Uterus (tissue), 4 donors: ENCODE measurements at regions of chr4 and their contacts with region 1.

Region 1: DNA sequence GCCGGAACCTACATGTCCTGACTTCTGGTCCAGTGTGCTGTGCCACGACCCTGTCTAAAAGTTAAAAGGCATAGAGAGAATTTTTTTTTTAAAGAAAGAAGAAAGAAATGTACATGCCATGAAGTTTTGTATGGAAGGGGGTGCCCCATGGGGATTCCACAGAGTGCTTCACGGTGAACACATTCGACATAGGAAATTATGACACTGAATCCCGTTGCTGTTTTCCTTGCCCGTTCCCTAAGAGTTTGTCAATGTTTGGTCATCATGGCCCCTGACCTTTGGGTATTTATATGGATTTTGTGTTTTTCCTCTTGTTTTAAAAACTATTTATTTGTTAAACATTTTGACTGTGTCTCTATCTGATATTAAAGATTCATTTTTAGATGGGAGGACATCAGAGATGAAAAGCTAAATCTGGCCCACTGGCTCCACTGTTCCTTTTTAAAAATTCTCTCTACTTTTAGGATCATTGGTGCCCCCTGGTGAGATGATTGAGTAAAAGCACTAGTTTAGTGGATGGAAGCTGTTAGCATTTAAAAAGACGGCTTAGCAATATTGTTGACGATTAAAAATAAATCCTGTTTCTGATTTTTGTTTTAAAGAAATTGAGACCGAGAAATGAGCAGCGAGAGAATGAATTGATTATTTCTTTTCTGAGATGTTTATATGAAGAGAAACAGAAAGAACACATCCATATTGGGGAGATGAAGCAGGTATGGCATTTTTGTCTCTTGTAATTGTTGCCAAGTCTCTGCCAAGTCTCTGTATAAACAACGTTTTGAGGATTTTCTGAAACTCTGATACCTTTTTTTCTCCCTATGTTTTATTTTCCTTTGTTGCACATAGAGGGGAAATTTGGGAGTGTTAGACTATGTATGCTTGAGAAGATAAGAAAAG is 75.0 kb downstream of the PTTG2 start:
- DNase-seq: peak in 1 of 2 donors; percentile 68
- H3K4me3 ChIP-seq: no peak overlapping the region
- H3K27ac ChIP-seq: peak overlapping the region; percentile 47 to 99
- H3K4me1 ChIP-seq: peaks cover 0 to 7% of the 10 kb centered on the region in 2 donors
- H3K27me3 ChIP-seq: no peaks in the 10 kb centered on the region
- CTCF ChIP-seq: peak; percentile 65 to 82 (median 68)
- POLR2A ChIP-seq: no peak

Region 2: DNA sequence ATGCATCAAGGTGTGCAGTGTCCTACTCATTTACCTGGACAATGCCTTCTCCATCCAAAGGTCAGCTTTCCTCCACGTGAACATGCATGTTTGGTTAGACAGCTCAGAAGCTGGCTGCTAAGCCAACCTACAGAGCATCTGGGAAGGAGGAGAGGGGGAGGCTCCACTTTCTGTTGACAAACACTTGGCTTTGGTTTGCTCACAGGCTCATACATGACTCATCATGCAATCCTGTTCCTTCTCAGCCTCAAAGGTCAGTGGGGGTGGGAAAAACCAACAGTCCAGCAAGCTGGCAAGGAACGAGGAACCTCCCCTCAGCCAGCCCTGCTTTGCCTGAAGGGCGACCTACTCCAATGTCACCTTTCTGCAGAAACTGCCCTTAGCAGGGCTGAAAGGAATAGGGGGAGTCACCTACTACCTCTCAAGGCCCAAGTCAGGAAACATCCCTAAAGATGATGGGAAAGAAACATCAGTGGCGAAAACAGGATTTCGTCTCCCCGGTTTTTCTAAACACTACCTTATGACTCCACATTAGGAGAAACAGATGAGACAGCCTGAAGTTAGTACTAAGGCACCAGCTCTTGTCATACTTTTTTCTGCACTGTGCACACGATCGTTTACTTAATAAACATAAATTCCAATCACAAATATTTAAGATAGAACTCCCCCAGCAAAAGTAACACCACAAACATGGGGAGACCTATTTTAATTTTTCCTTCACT is 387.0 kb before region 1 on chr4:
- intact Hi-C with region 1: no loop called
- DNase-seq: peak; percentile 68 to 70
- H3K4me3 ChIP-seq: no peak overlapping the region
- H3K27ac ChIP-seq: peak overlapping the region; percentile 28 to 51
- H3K4me1 ChIP-seq: no peaks in the 10 kb centered on the region
- H3K27me3 ChIP-seq: no peaks in the 10 kb centered on the region
- CTCF ChIP-seq: no peak
- POLR2A ChIP-seq: no peak

Region 3: DNA sequence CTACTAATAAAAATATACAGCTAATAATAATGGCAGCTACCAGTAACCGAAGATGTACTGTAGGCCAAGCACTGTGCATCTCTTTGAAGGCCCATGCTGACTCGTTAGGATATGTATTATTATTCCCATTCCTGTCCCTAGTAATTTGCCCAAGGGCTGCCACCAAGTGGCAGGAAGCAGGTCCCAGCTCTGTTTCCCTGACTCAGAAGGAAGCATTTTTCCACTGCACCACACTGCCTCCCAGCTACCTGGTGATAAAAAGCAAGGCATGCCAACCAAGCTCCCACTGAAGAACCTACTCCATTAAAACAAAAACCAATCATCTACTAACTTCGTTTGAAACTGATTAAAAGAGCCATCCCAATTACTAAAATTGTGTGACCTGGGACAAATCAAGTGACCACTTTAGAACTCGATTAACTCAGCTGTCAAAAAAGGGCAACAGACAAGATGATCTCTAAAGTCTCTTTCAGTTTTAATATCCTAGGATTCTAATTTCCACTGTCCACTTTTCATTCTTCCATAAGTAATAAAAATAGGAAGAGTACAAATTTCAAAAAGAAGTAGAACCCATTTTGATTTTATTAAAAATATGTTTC is 233.1 kb before region 1 on chr4:
- intact Hi-C with region 1: loop called (anchors 10 kb)
- DNase-seq: peak in 1 of 2 donors; percentile 21
- H3K4me3 ChIP-seq: no peak overlapping the region
- H3K27ac ChIP-seq: no peak overlapping the region
- H3K4me1 ChIP-seq: no peaks in the 10 kb centered on the region
- H3K27me3 ChIP-seq: no peaks in the 10 kb centered on the region
- CTCF ChIP-seq: peak in 2 of 4 experiments; percentile 43 to 57
- POLR2A ChIP-seq: no peak

Region 4: GRCh38 chr4:37891260-37892159 is 143.7 kb before region 1 on chr4:
- intact Hi-C with region 1: loop called (anchors 10 kb)
- DNase-seq: peak; percentile 48 to 69
- H3K4me3 ChIP-seq: peak overlapping the region; percentile 61 to 64
- H3K27ac ChIP-seq: peak overlapping the region; percentile 92 to 94
- H3K4me1 ChIP-seq: peaks cover 0 to 9% of the 10 kb centered on the region in 2 donors
- H3K27me3 ChIP-seq: no peaks in the 10 kb centered on the region
- CTCF ChIP-seq: peak in 2 of 4 experiments; percentile 21 to 27
- POLR2A ChIP-seq: peak in 1 of 2 donors; percentile 38

Region 5: GRCh38 chr4:37928426-37929416 is 106.5 kb before region 1 on chr4:
- intact Hi-C with region 1: no loop called
- DNase-seq: no peak
- H3K4me3 ChIP-seq: no peak overlapping the region
- H3K27ac ChIP-seq: peak overlapping the region in 1 of 2 donors; percentile 10
- H3K4me1 ChIP-seq: no peaks in the 10 kb centered on the region
- H3K27me3 ChIP-seq: no peaks in the 10 kb centered on the region
- CTCF ChIP-seq: no peak
- POLR2A ChIP-seq: no peak

Region 6: DNA sequence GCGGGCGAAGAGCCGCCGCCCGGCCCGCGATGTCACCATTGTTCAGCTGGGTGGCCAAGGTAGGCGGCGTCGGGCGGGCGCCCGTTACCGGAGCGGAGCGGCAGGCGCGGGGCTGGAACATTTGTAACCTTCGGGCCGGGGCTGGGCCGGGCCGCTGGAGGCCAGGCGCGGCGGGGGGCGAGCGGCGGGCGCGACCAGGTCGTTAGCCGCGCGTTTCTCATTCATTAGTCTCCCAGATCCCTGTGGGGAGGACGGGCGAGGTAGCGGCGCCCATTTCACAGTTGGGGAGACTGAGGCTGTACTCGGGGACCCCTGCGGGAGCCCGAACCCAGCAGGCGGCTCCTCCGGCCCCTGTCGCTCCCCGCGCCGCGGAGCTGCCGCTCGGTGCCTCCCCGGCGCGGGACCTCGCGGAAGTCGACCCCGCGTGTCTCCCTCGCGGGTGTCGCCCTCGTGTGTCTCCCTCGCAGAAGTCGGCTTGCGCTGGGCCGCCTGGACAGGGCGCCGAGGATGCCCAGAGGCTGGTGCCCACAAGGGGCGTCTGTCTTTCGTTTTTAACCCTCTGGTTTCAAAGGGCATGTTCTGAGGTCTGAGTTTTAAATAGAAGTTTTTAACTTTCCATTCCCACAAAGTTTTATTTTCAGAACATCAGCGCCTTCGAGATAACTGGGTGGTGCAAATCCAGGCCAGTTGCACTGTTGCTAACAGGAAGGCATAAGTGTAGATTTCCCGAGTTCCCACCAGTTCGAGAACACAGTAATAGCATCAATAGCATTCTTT is 57.6 kb before region 1 on chr4:
- intact Hi-C with region 1: loop called (anchors 10 kb)
- DNase-seq: peak; percentile 75 to 78
- H3K4me3 ChIP-seq: peak overlapping the region; percentile 39 to 73
- H3K27ac ChIP-seq: peak overlapping the region; percentile 95 to 99
- H3K4me1 ChIP-seq: no peaks in the 10 kb centered on the region
- H3K27me3 ChIP-seq: no peaks in the 10 kb centered on the region
- CTCF ChIP-seq: peak; percentile 70 to 85 (median 74)
- POLR2A ChIP-seq: peak; percentile 2 to 39

Region 7: GRCh38 chr4:38119668-38120385 is 84.6 kb after region 1 on chr4:
- intact Hi-C with region 1: no loop called
- DNase-seq: no peak
- H3K4me3 ChIP-seq: no peak overlapping the region
- H3K27ac ChIP-seq: peak overlapping the region; percentile 58 to 79
- H3K4me1 ChIP-seq: peaks cover 0 to 19% of the 10 kb centered on the region in 2 donors
- H3K27me3 ChIP-seq: no peaks in the 10 kb centered on the region
- CTCF ChIP-seq: no peak
- POLR2A ChIP-seq: no peak